GM10248 (cell line): ENCODE measurements at regions of chr2 and their contacts with region 1.

Region 1: GRCh38 chr2:147619808-147620207 is 225.0 kb upstream of the ACVR2A start:
- DNase-seq: no peak
- CTCF ChIP-seq: no peak

Region 2: GRCh38 chr2:147632198-147632597 is 12.4 kb after region 1 on chr2:
- CTCF ChIA-PET with region 1: interaction called, 10 read pairs
- POLR2A ChIA-PET with region 1: no interaction called
- DNase-seq: no peak
- CTCF ChIP-seq: no peak